Posterior vena cava (tissue), 2 donors: ENCODE measurements at regions of chr17 and their contacts with region 1.

Region 1: DNA sequence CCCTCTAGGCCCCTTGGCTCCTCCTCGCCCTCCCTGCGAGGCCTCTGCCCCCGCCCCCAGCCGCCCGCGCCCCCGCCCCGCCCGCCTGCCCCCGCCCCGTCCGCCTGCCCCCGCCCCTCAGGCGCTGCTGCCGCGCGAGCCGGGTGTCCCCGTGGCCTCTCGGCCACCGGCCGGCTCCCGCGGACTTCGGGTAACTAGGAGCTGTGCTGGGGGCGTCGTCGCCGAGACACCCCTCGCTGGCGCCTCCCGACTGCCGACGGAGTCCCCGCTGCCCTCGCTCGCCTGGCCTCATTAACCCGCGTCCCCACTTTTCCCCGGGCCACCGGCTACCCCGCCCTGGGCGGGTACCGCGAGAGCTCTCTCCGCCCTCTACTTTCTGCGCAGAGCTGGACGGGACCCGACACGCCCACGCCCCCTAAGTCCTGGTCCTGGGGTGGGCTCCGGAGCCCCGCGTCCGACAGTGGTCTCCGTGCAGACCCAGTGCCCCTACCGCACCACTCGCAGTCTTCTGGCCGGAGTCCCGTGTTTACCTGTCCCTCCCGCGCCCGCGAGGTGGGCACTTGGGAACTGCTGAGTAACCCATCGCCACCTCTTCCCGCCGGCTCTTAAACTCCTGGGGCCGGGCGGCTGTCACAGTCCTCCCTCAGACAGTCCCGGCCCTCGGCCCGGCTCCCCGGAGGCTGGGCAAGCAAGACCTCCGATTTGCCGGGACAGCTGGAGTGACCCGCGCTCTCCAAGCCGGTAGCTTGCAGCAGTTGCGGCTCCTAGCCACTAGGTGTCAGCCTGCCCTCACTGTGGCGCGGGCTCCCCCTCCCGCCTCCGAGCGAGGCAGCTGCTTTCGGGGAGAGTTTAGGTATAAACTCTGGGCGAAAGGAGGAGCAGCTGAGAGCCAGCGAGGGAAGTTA is at the start of gene TLCD1:
- DNase-seq: peak; percentile 98
- total RNA-seq, gene TLCD1: 2.2 to 3.1 TPM

Region 2: DNA sequence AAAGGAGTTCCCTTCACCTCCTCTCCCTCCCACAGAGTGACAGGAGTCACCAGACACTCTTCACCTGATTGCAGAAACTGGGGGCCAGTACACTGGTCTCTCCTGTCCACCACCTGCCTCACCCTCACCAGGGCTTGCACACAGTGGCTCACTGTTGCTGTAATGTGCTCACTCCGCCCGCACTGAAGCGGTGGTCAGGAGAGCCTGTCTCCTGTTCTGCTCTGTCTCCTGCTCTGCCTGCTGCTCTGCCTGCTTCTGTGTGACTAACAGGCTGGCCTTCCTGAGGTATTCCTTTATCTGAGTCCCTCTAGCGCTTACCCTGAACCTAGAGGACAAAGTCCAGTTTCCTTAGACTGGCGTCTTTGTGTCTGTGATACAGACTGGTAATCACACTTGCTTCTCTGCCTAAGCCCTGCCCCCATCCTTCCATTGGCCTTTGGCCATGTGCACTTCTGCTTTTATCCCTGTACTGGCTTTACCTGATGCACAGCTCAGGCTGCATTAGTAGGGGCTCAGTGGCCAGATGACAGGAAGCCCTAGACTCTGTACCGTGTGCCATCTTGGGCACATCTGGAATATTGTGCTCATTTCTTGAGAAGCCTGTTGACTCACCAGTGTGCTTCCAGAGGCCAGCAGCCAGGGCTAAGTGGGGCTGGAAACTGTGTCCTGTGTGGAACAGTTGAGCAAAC is 28.1 kb before region 1 on chr17:
- intact Hi-C with region 1: no loop called
- DNase-seq: no peak

Region 3: GRCh38 chr17:28743225-28744103 is 17.0 kb after region 1 on chr17 and contains the start of gene TRAF4:
- intact Hi-C with region 1: loop called in 1 of 2 experiments (anchors 2 kb)
- DNase-seq: peak; percentile 91
- total RNA-seq, gene TRAF4: 10.2 to 10.8 TPM

Region 4: DNA sequence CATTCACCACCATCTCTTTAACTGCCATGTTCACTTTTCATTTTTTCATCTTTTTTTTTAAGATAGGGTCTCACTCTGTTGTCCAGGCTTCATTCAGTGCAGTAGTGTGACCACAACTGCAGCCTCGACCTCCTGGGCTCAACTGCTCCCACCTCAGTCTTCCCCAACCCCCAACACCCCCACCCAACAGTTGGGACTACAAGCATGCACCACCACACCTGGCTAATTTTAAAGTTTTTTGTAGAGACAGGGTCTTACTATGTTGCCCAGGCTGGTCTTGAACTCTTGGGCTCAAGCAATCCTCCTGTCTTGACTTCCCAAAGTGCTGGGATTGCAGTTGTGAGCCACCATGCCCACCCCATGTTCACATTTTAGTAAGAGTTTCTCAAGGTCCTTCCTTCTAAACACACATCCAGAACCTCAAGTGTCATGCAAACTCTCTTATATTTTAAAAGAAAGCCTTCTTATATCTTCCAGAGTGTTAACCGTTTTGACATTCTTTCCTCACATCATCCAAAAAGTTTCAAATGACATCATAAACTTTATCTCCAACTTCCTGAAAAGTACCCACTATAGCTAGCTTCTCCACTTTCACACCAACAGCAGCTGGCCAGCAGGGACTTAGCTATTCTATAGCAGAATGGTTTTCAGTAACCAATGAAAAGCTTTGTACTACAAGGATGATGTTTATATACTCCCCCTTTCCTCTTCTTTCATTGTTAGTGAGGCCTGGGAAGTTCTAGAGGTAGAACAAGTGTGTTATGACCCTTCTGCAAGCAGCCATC is 66.6 kb after region 1 on chr17:
- intact Hi-C with region 1: no loop called
- DNase-seq: no peak

Region 5: GRCh38 chr17:28908640-28909167 is 182.2 kb after region 1 on chr17:
- intact Hi-C with region 1: loop called in 1 of 2 experiments (anchors 5 kb)
- DNase-seq: no peak

Region 6: DNA sequence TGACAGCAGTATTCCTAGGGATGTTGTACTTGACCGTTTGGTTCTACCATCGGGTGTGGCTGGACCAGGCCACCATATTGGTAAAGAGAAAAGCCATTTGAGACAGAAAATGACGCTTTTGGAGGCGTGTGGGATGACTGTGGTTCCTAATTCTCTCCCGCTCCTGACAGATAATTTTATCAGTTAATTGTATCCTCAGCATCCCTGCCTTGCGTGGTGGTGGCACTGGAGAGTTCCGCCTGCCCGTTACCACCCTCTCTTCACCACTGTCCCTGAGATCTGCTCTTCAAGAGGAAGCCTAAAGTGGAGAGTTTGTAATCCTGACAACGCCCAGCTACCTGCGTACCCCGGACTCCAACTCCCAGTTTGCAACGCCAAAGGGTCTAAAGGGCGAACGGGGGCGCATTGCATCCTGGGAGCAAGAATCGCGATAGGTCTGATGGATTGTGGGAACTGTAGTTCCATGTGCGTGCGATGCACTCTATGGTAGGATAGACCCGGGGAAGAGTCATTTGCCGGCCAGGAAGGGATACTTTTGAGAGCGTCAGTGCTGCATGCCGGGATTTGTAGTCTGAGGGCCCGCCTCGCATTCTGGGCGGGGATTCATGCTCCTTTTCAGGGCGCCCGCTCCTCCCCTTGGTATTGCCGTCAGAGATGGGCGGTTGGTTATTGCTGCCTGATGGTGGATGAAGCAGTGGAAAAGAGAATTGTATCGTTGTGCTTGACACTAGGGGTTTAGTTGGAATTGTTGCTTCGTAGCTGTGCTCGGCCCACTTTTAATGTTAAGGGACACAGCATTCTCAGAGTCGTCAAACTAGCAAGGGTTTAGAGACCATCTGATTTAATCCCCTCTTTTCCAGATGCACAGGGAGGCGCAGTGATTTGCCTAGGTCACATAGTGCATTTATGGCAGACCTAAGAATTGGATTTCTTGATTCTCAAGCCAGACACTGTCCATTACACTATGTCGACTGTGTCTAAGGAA is 225.8 kb after region 1 on chr17:
- intact Hi-C with region 1: loop called in 1 of 2 experiments (anchors 5 kb)
- DNase-seq: peak; percentile 98